Mammary epithelial cell (primary cell): ENCODE measurements at regions of chr5 and their contacts with region 1.

Region 1: GRCh38 chr5:170917113-170917512 is 55.3 kb downstream of the RANBP17 start:
- DNase-seq: no peak
- H3K4me3 ChIP-seq: no peak overlapping the region
- H3K27ac ChIP-seq: no peak overlapping the region
- H3K4me1 ChIP-seq: no peaks in the 10 kb centered on the region
- H3K27me3 ChIP-seq: no peaks in the 10 kb centered on the region
- CTCF ChIP-seq: peak; percentile 2 to 6

Region 2: GRCh38 chr5:170638454-170639220 is 278.5 kb before region 1 on chr5:
- CTCF ChIA-PET with region 1: no interaction called
- dilution Hi-C with region 1: no loop called
- in situ Hi-C with region 1: no loop called
- intact Hi-C with region 1: loop called (anchors 10 kb)
- DNase-seq: peak; percentile 35
- H3K4me3 ChIP-seq: no peak overlapping the region
- H3K27ac ChIP-seq: no peak overlapping the region
- H3K4me1 ChIP-seq: peaks cover 7% of the 10 kb centered on the region
- H3K27me3 ChIP-seq: no peaks in the 10 kb centered on the region
- CTCF ChIP-seq: peak; percentile 70 to 92

Region 3: DNA sequence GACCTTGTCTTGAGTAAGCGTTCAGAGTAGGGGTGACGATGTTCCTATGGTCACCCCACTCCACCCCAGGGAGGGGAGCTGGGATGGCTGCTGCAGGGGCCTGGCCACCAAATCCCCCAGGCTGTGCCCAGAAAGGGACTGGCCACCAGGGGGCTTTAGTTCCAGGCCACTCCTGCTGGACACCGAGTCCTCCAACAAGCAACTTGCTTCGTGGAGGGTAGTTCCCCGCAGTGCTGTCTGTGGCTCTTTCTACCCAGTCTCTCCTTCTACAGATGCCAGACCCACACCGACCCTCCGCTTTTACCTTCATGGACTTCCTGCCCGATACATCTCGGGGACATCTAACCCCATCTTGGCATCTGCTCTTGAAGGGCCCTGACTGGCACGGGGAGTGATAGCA is 169.3 kb before region 1 on chr5:
- CTCF ChIA-PET with region 1: no interaction called
- dilution Hi-C with region 1: no loop called
- in situ Hi-C with region 1: no loop called
- intact Hi-C with region 1: loop called (anchors 10 kb)
- DNase-seq: no peak
- H3K4me3 ChIP-seq: no peak overlapping the region
- H3K27ac ChIP-seq: no peak overlapping the region
- H3K4me1 ChIP-seq: peaks cover 41% of the 10 kb centered on the region
- H3K27me3 ChIP-seq: peaks cover 1% of the 10 kb centered on the region
- CTCF ChIP-seq: peak; percentile 16 to 21

Region 4: DNA sequence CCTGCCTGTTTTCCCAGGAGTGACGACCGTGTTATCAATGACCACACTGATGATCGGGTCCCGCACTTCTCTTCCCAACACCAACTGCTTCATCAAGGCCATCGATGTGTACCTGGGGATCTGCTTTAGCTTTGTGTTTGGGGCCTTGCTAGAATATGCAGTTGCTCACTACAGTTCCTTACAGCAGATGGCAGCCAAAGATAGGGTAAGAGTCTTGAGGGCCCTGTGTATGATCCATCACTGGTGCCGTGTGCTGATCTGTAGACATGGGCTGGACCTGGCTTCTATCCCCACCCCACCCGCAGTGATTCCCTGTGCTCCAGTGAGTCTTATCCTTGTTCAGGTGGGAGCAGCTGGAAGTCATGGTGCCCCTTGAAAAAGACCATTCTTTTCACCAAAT is 107.6 kb before region 1 on chr5:
- CTCF ChIA-PET with region 1: no interaction called
- dilution Hi-C with region 1: no loop called
- in situ Hi-C with region 1: no loop called
- intact Hi-C with region 1: loop called (anchors 1 kb)
- DNase-seq: peak; percentile 23
- H3K4me3 ChIP-seq: no peak overlapping the region
- H3K27ac ChIP-seq: no peak overlapping the region
- H3K4me1 ChIP-seq: no peaks in the 10 kb centered on the region
- H3K27me3 ChIP-seq: no peaks in the 10 kb centered on the region
- CTCF ChIP-seq: peak; percentile 3 to 54

Region 5: DNA sequence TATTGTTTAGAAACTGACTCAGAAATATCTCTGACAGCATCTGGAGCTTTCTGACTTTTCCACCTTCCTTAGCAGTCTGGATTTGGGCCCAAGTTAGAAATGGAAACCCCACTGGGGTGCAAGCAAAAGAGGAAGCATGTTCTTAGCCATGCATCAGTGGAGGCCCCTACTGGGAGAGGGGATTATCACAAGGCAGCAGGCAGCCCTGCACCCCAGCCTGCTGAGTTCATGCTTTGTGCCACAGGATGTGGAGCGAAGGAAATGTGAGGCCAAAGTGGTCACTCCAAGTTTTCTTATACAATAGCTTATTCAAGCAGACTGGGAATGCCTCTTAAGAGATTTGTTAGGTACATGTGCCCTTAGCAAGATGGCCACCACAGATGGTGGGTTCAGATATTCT is 245.5 kb after region 1 on chr5:
- CTCF ChIA-PET with region 1: no interaction called
- dilution Hi-C with region 1: no loop called
- in situ Hi-C with region 1: no loop called
- intact Hi-C with region 1: loop called (anchors 10 kb)
- DNase-seq: no peak
- H3K4me3 ChIP-seq: no peak overlapping the region
- H3K27ac ChIP-seq: no peak overlapping the region
- H3K4me1 ChIP-seq: peaks cover 8% of the 10 kb centered on the region
- H3K27me3 ChIP-seq: no peaks in the 10 kb centered on the region
- CTCF ChIP-seq: peak; percentile 17 to 46